ENCODE measurements at regions of chr2 and their contacts with region 1.

Region 1: GRCh38 chr2:69914170-69914960 is 544 bp upstream of the MXD1 start:
- DNase-seq: peak; percentile 100
- H3K4me3 ChIP-seq: peak overlapping the region; percentile 84 to 95
- H3K27ac ChIP-seq: peak overlapping the region; percentile 80 to 88
- H3K4me1 ChIP-seq: peaks cover 0 to 36% (median 21%) of the 10 kb centered on the region in 4 donors
- H3K27me3 ChIP-seq: no peaks in the 10 kb centered on the region
- CTCF ChIP-seq: peak in 1 of 2 experiments; percentile 6

Region 2: DNA sequence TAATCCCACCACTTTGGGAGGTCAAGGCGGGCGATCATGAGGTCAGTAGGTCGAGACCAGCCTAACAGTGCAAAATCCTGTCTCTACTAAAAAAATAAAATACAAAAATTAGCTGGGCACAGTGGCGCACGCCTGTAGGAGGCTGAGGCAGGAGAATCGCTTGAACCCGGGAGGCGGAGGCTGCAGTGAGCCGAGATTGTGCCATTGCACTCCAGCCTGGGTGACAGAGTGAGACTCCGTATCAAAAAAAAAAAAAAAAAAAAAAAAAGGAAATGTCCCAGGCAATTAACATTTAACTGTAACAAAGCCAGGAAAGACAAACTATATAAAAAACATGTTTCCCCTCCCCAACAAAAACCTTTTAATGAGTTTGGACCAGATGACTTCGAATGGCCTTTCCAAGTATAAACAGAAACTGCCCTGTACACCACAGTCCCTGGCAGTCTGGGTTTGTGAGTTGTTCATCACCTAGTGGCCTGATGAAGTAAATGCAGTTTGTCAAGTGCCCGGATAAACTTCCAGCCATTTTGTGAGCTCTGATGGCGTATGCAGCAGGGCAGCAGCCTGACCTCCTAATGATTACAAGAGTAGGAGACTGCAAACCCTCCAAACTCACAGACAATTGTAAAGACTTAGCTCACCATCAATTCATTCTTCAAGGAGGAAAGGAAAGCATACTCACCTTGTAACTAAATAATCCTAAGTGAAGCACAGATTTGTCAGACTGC is 156.3 kb after region 1 on chr2:
- intact Hi-C with region 1: loop called (anchors 2 kb)
- DNase-seq: peak; percentile 72 to 80
- H3K4me3 ChIP-seq: peak overlapping the region; percentile 17 to 33
- H3K27ac ChIP-seq: peak overlapping the region; percentile 61 to 76
- H3K4me1 ChIP-seq: peaks cover 0 to 23% (median 4%) of the 10 kb centered on the region in 4 donors
- H3K27me3 ChIP-seq: no peaks in the 10 kb centered on the region
- CTCF ChIP-seq: peak; percentile 77 to 84

Region 3: GRCh38 chr2:70142590-70143313 is 228.4 kb after region 1 on chr2:
- intact Hi-C with region 1: loop called (anchors 5 kb)
- DNase-seq: peak; percentile 99 to 100
- H3K4me3 ChIP-seq: peak overlapping the region; percentile 73 to 92
- H3K27ac ChIP-seq: peak overlapping the region; percentile 99 to 100
- H3K4me1 ChIP-seq: peaks cover 0 to 22% (median 14%) of the 10 kb centered on the region in 4 donors
- H3K27me3 ChIP-seq: no peaks in the 10 kb centered on the region
- CTCF ChIP-seq: peak; percentile 93 to 100

Region 4: DNA sequence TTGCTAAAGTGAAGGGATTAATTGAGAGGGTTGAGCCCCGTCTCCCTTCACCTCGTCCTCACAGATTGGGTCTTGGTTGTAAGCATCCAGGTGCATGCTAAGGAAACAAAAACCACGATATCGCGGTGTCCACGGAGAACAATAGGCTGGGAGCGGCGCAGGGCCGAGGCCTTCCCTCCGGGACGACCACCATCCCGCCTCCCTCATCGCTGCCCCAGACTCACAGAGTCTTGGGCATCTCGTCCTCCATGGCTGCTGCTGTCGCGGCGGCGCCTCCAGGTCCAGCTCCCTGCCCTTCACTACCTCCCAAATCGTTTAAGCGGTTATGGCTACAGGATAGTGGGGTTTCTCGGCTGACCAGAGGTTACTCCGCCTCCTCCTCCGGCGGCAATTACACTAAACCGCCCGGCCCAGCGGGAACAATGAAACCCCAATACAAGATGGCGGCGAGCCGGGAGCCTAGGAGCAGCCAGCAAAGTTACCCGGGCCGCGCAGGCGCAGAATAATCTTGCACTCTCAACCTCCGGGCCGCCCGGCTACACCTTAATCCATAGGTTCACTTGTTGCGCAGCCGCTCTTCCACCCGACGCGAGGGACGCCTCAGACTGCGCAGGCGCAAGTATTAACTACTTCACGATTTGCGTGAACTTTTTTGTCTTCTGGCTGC is 333.9 kb after region 1 on chr2 and contains the start of gene TIA1:
- intact Hi-C with region 1: loop called (anchors 10 kb)
- DNase-seq: peak; percentile 98 to 99
- H3K4me3 ChIP-seq: peak within 1 kb of the TSS; percentile 73 to 88
- H3K27ac ChIP-seq: peak within 1 kb of the TSS; percentile 90 to 95
- H3K4me1 ChIP-seq: peaks cover 0 to 37% (median 26%) of the 10 kb centered on the region in 4 donors
- H3K27me3 ChIP-seq: no peaks in the 10 kb centered on the region
- CTCF ChIP-seq: no peak

Region 5: GRCh38 chr2:70301344-70302194 is 387.2 kb after region 1 on chr2 and contains the start of gene FAM136A:
- intact Hi-C with region 1: loop called (anchors 5 kb)
- DNase-seq: peak; percentile 74 to 89
- H3K4me3 ChIP-seq: peak within 1 kb of the TSS; percentile 72 to 85
- H3K27ac ChIP-seq: peak within 1 kb of the TSS; percentile 80
- H3K4me1 ChIP-seq: peaks cover 0 to 10% (median 7%) of the 10 kb centered on the region in 4 donors
- H3K27me3 ChIP-seq: no peaks in the 10 kb centered on the region
- CTCF ChIP-seq: peak; percentile 93 to 98